ENCODE measurements at regions of chr7 and their contacts with region 1.

Region 1: DNA sequence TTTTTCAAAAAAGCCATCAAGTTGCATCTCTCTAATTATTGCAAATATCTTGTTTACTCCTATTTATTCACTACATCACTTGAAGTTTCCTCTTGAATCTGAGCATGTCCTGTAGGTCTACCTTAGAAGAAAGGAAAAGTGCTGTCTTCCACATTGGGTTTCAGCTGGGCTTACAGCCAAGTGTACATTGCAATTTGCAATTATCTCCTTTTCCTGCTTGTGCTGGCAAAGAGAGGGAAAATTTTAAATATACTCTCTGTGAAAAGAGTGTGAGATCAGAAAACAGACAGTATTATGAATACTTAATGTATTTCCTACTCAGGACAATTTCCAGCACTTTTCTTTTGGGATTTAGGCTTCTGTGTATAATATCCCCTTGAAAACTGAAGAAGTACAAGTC is 839.7 kb downstream of the CNTNAP2 start:
- DNase-seq: no peak

Region 2: GRCh38 chr7:146683439-146683838 is 272.9 kb before region 1 on chr7:
- intact Hi-C with region 1: no loop called
- DNase-seq: no peak

Region 3: DNA sequence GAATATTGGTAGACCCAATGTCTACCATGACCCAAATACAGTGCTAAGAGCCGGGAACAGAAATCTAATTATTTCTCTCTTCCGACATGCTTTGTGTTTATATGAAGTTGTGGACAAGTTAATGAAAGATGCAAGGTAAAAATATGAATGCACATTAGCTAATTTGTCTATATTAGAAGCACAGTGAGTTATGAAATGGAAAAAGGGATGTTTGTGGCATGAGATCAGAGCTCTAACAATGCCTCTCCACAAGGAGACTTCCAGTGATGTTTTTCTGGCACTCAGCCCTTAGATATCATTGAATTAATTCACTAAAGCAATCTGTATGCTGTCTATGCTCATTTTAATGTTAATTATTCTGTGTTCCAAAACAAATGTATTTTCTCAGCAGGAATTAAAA is 57.5 kb after region 1 on chr7:
- intact Hi-C with region 1: loop called (anchors 10 kb)
- DNase-seq: no peak

Measured in cardiac septum (tissue), 1 donor.